H1 (cell line): ENCODE measurements at regions of chr9 and their contacts with region 1.

Region 1: GRCh38 chr9:69193685-69194032 is 19.6 kb downstream of the TJP2 start:
- DNase-seq: no peak
- H3K4me3 ChIP-seq: no peak overlapping the region
- H3K27ac ChIP-seq: no peak overlapping the region
- H3K4me1 ChIP-seq: peaks cover 0 to 14% (median 2%) of the 10 kb centered on the region in 4 experiments; a peak in 3 of 7 replicates
- H3K27me3 ChIP-seq: no peaks in the 10 kb centered on the region
- CTCF ChIP-seq: peak in 2 of 3 experiments; percentile 20 to 38; a peak in 2 of 4 replicates
- EP300 ChIP-seq: no peak
- POLR2A ChIP-seq: no peak
- RAD21 ChIP-seq: peak; percentile 51 to 62; a peak in 3 of 4 replicates

Region 2: GRCh38 chr9:69085569-69086283 is 107.9 kb before region 1 on chr9:
- CTCF ChIA-PET with region 1: interaction called, 12 read pairs
- POLR2A ChIA-PET with region 1: no interaction called
- DNase-seq: no peak
- H3K4me3 ChIP-seq: no peak overlapping the region
- H3K27ac ChIP-seq: no peak overlapping the region
- H3K4me1 ChIP-seq: peaks cover 0 to 15% (median 9%) of the 10 kb centered on the region in 4 experiments; a peak in 6 of 7 replicates
- H3K27me3 ChIP-seq: no peaks in the 10 kb centered on the region
- CTCF ChIP-seq: no peak
- EP300 ChIP-seq: no peak
- POLR2A ChIP-seq: no peak
- RAD21 ChIP-seq: no peak

Region 3: DNA sequence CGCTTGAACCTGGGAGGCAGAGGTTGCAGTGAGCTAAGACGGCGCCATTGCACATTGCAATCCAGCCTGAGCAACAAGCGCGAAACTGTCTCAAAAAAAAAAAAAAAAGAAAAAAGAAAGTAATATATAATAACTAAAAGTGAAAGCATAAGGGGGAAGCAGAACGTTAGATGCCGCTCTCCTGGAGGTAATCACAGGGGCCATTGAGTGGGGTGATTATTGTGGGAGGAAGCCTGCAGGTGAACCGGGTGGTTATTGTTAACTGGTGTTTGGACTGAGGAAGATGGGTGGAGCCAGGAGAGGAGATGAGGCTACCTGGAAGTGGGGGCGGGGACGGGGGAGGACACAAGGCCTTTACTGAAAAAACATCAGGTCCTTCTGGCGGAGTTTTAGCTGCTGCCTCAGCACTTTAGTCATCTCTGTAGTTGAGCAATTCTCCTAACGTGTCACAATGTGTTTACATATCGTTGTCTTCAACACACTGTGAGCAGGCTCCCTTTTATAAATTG is 24.9 kb before region 1 on chr9:
- CTCF ChIA-PET with region 1: interaction called, 18 read pairs
- POLR2A ChIA-PET with region 1: interaction called, 3 read pairs
- DNase-seq: peak in 1 of 2 experiments; percentile 61
- H3K4me3 ChIP-seq: no peak overlapping the region
- H3K27ac ChIP-seq: no peak overlapping the region
- H3K4me1 ChIP-seq: peaks cover 0 to 8% (median 3%) of the 10 kb centered on the region in 4 experiments; a peak in 4 of 7 replicates
- H3K27me3 ChIP-seq: no peaks in the 10 kb centered on the region
- CTCF ChIP-seq: no peak
- EP300 ChIP-seq: no peak
- POLR2A ChIP-seq: no peak
- RAD21 ChIP-seq: no peak

Region 4: DNA sequence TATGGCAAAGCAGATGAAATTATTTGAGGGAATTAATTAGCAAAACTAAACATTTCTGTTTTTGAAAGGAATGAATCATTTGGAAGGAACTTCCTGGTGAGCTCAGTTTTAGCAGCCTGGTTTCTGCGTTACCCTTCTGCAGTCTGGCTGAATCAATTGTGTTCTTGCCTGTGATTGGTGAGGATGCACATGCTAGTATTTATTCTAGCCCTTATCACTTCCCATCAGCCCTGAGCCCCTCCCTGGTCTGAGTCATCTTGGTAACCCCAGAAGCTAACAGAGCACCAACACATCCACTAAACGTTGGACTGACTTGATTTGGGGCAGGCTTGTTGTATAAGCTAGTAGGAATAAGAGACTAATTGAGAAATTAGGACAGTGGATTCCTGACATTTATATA is 13.0 kb before region 1 on chr9:
- CTCF ChIA-PET with region 1: interaction called, 61 read pairs
- POLR2A ChIA-PET with region 1: interaction called, 3 read pairs
- DNase-seq: no peak
- H3K4me3 ChIP-seq: no peak overlapping the region
- H3K27ac ChIP-seq: no peak overlapping the region
- H3K4me1 ChIP-seq: peaks cover 0 to 7% (median 4%) of the 10 kb centered on the region in 4 experiments; a peak in 5 of 7 replicates
- H3K27me3 ChIP-seq: no peaks in the 10 kb centered on the region
- CTCF ChIP-seq: no peak
- EP300 ChIP-seq: no peak
- POLR2A ChIP-seq: no peak
- RAD21 ChIP-seq: no peak

Region 5: GRCh38 chr9:69237702-69238295 is 44.1 kb after region 1 on chr9:
- CTCF ChIA-PET with region 1: no interaction called
- POLR2A ChIA-PET with region 1: no interaction called
- DNase-seq: no peak
- H3K4me3 ChIP-seq: no peak overlapping the region
- H3K27ac ChIP-seq: no peak overlapping the region
- H3K4me1 ChIP-seq: no peaks in the 10 kb centered on the region; a peak in 1 of 7 replicates
- H3K27me3 ChIP-seq: no peaks in the 10 kb centered on the region
- CTCF ChIP-seq: no peak
- EP300 ChIP-seq: no peak
- POLR2A ChIP-seq: no peak
- RAD21 ChIP-seq: no peak